Activated B cell treated with CpG ODN at 0.5 μM for 24 hours (primary cell): ENCODE measurements at regions of chr14 and their contacts with region 1.

Region 1: GRCh38 chr14:23379366-23380196 is 2.7 kb downstream of the CMTM5 start:
- DNase-seq: peak; percentile 56
- ATAC-seq: peak; percentile 87
- H3K4me3 Mint-ChIP-seq: no peak overlapping the region
- H3K27ac Mint-ChIP-seq: no peak overlapping the region
- H3K4me1 Mint-ChIP-seq: no peaks in the 10 kb centered on the region
- H3K27me3 Mint-ChIP-seq: peaks cover 20% of the 10 kb centered on the region
- CTCF ChIP-seq: peak; percentile 81

Region 2: DNA sequence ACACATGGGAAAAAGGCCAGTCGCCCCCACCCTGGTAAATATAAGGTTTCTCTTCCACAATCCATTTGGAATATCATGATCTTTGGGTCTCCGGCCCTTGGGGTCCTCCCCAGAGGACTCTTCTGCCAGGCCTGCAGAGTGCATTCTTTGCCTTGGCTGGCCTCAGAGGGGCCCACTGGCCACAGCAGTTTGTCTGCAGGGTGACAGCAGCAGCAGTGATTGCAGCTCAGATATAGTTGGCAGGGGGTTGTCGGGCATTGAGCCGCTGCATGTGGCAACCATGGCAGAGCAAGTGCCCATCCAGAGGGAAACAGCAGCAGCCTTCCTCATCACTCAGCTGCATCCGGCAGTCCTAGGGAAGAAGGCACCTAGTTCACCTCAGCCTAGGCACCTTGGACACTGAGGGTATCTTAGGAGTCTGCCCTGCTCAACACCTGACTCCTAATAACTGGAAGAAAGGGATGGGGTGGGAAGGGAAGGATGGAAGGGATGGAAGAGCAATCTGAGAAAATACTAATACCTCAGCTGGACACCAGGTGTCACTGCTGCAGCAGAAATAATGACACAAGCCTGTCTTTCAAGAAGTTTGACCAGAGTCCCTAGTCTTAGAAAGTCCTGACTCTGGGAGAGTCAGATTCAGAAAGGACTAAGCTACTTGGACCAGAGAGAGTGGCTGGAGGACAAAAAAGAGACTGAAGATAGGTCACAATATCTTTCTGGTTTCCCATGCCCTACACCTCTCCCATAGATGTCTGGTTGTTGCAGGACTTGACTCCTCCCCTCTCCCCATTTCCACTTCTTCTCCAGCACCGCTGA is 406.2 kb before region 1 on chr14:
- CTCF ChIA-PET with region 1: interaction called, 4 read pairs
- POLR2A ChIA-PET with region 1: no interaction called
- intact Hi-C with region 1: loop called (anchors 1 kb)
- DNase-seq: no peak
- ATAC-seq: peak; percentile 68
- H3K4me3 Mint-ChIP-seq: no peak overlapping the region
- H3K27ac Mint-ChIP-seq: no peak overlapping the region
- H3K4me1 Mint-ChIP-seq: peaks cover 5% of the 10 kb centered on the region
- H3K27me3 Mint-ChIP-seq: peaks cover 13% of the 10 kb centered on the region
- CTCF ChIP-seq: no peak

Region 3: GRCh38 chr14:23068476-23069412 is 310.8 kb before region 1 on chr14:
- CTCF ChIA-PET with region 1: interaction called, 5 read pairs
- POLR2A ChIA-PET with region 1: no interaction called
- intact Hi-C with region 1: loop called (anchors 2 kb)
- DNase-seq: no peak
- ATAC-seq: peak; percentile 85
- H3K4me3 Mint-ChIP-seq: peak overlapping the region; percentile 22
- H3K27ac Mint-ChIP-seq: peak overlapping the region; percentile 50
- H3K4me1 Mint-ChIP-seq: peaks cover 36% of the 10 kb centered on the region
- H3K27me3 Mint-ChIP-seq: no peaks in the 10 kb centered on the region
- CTCF ChIP-seq: peak; percentile 79

Region 4: DNA sequence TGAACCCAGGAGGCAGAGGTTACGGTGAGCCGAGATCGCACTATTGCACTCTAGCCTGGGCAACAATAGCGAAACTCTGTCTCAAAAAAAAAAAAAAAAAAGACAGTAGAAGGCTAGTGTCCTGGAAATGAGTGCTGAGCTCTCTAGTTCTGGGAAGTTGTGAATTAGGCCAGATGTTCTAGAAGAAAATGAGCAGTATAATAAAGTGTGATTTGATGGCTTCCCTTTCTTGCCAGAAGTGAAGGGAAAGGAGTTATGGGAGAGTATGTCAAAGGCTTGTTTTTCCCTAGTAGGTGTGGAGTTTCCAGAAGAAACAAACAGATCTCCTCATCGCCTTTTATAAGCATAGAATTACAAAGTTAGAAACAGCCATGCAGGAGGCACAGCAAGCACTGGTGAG is 121.3 kb before region 1 on chr14:
- CTCF ChIA-PET with region 1: interaction called, 12 read pairs
- POLR2A ChIA-PET with region 1: no interaction called
- intact Hi-C with region 1: no loop called
- DNase-seq: no peak
- ATAC-seq: no peak
- H3K4me3 Mint-ChIP-seq: no peak overlapping the region
- H3K27ac Mint-ChIP-seq: no peak overlapping the region
- H3K4me1 Mint-ChIP-seq: no peaks in the 10 kb centered on the region
- H3K27me3 Mint-ChIP-seq: peaks cover 35% of the 10 kb centered on the region
- CTCF ChIP-seq: no peak

Region 5: GRCh38 chr14:23269193-23269592 is 110.4 kb before region 1 on chr14:
- CTCF ChIA-PET with region 1: interaction called, 24 read pairs
- POLR2A ChIA-PET with region 1: no interaction called
- intact Hi-C with region 1: loop called (anchors 1 kb)
- DNase-seq: no peak
- ATAC-seq: no peak
- H3K4me3 Mint-ChIP-seq: no peak overlapping the region
- H3K27ac Mint-ChIP-seq: no peak overlapping the region
- H3K4me1 Mint-ChIP-seq: no peaks in the 10 kb centered on the region
- H3K27me3 Mint-ChIP-seq: peaks cover 13% of the 10 kb centered on the region
- CTCF ChIP-seq: no peak

Region 6: DNA sequence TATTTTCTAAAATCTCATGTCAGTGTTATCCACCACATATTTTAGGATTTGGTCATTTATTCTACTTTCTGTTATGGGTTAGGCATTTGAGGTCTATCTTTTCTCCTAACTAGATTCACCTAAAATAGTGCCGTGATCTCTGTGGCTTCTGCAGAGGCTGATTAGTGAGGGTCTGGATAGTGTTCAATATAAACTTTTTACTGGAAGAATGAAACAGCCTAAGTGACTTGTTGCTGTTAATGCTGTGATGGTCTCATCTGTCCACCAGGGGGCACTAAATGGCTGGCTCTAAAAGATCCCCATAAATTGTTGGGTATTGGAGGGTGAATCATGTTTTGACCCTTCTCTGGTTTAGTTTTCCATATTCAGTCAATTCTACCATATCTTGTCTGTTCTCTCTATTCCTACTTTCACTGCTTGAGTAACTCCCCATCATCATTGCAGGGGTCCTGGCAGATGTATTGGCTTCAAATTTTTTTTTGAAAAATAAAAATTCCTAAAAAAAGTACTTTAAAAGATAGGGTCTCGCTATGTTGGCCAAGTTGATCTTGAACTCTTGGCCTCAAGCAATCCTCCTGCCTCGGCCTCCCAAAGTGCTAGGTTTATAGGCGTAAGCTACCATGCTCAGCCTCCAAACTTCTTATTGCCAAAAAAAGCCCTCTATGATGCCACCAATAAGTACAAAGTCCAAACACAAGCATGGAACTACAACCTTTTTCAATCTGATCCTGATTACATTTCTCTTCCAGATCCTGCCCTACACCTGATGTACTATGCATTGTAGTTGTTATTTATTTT is 51.4 kb before region 1 on chr14:
- CTCF ChIA-PET with region 1: interaction called, 13 read pairs
- POLR2A ChIA-PET with region 1: no interaction called
- intact Hi-C with region 1: loop called (anchors 1 kb)
- DNase-seq: no peak
- ATAC-seq: peak; percentile 73
- H3K4me3 Mint-ChIP-seq: no peak overlapping the region
- H3K27ac Mint-ChIP-seq: no peak overlapping the region
- H3K4me1 Mint-ChIP-seq: peaks cover 3% of the 10 kb centered on the region
- H3K27me3 Mint-ChIP-seq: no peaks in the 10 kb centered on the region
- CTCF ChIP-seq: peak; percentile 42